Left cardiac atrium (tissue), 4 donors: ENCODE measurements at regions of chr11 and their contacts with region 1.

Region 1: DNA sequence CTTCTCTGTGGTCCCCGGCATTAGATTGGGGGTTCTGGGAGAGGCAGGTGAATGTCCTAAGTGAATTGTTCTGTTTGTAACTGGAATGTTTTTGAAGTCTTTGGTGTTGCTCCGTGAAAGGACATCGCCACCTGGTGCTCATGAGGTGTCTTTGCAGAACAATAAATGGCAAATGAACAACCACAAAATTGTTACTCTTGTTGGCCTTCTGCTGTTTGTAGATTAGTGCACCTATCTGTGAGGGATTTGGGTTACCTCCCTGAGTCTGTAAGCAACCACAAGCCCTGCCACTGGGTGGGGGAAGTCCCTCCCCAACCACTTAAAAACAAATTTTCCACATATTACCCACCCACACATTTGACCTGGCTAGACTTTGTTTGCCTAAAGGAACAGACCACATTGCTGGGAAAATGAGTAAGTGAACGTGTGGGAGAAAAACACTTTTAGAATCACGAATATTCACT is 4.7 kb downstream of the MPEG1 start:
- DNase-seq: peak; percentile 45
- ATAC-seq: peak; percentile 49 to 68

Region 2: DNA sequence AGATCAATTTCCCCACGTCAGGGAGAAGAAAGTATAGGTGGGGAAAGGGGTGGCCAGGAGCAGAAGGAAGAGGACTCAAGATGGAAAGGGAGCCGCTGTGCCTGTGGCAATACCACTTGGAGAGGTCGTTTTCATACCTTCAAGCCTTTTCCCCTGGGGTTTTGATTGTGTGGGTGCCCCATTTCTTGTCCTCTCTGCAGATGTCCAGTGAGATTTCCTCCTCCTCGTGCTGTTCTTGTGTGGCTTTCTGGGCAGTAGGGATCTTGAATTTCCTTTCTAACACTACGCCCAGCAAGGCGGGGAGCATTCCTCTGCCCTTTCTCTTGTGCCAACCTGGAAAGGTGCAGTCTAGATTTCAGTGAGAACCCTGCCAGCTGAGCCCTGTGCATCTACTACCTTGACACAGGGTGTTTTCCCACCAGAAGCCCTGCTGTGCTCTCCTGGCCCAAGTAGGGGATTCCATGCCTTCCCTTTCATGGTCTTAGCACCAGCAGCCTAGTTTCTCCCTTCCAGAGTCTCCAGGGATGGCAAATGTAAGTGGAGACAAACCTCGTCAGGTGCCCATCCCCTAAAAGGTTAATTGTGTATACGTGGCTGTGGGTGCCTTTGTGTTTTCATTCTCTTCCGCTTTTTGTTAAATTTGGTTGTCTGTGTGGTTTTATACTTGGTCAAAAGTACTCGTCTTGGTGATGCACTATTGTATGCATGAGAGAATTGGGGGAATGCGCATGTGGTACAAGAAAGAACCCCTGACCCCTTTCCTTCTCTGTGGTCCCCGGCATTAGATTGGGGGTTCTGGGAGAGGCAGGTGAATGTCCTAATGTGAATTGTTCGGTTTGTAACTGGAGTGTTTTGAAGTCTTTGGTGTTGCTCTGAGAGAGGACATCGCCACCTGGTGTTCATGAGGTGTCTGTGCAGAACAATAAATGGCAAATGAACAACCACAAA is 76.1 kb after region 1 on chr11:
- intact Hi-C with region 1: loop called in 1 of 2 experiments (anchors 5 kb)
- DNase-seq: peak; percentile 42
- ATAC-seq: peak; percentile 44 to 71